Sigmoid colon (tissue), 7 donors: ENCODE measurements at regions of chr12 and their contacts with region 1.

Region 1: GRCh38 chr12:6965026-6965661 is 5.3 kb downstream of the PHB2 start:
- DNase-seq: peak; percentile 96
- H3K4me3 ChIP-seq: no peak overlapping the region
- H3K27ac ChIP-seq: peak overlapping the region; percentile 81 to 86 (median 82)
- H3K4me1 ChIP-seq: peaks cover 0 to 57% (median 46%) of the 10 kb centered on the region in 4 donors
- H3K27me3 ChIP-seq: no peaks in the 10 kb centered on the region
- CTCF ChIP-seq: peak; percentile 81 to 97 (median 88)
- EP300 ChIP-seq: no peak
- POLR2A ChIP-seq: no peak

Region 2: DNA sequence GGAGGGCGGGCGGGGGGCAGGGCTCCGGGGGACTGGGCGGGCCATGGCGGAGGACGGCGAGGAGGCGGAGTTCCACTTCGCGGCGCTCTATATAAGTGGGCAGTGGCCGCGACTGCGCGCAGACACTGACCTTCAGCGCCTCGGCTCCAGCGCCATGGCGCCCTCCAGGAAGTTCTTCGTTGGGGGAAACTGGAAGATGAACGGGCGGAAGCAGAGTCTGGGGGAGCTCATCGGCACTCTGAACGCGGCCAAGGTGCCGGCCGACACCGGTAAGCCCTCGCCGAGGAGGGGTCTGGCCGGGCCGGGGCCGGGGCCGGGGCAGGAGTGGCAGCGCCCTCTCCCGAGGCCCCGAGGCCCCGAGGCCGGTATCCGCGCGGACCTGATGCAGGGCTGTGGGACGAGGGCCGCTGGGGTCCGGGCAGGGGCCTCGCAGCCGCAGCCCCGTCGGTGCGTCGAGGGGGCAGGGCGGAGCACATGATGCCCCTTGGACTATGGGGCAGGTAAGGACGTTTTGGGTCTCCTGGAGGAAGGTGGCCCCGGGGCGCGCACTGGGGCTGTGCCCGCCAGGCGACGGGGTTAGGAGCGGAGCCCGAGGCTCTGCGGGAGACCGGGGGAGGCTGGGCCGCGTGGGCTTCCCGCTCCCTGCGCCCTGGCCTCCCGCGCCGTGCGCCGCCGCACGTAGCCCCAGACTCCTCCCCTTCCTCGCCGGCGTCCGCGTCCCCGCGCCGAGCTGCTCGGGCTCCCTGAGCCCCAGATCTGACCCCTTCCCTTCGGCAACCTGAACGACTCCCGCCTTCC is 97.5 kb before region 1 on chr12 and contains the start of gene TPI1:
- intact Hi-C with region 1: loop called (anchors 2 kb)
- DNase-seq: peak; percentile 96
- H3K4me3 ChIP-seq: peak within 1 kb of the TSS; percentile 72 to 100 (median 96)
- H3K27ac ChIP-seq: peak within 1 kb of the TSS; percentile 95 to 100 (median 98)
- H3K4me1 ChIP-seq: peaks cover 0 to 48% (median 42%) of the 10 kb centered on the region in 4 donors
- H3K27me3 ChIP-seq: no peaks in the 10 kb centered on the region
- CTCF ChIP-seq: no peak
- EP300 ChIP-seq: no peak
- POLR2A ChIP-seq: peak; percentile 96 to 98
- total RNA-seq, gene TPI1: 194 to 345 (median 299) TPM

Region 3: DNA sequence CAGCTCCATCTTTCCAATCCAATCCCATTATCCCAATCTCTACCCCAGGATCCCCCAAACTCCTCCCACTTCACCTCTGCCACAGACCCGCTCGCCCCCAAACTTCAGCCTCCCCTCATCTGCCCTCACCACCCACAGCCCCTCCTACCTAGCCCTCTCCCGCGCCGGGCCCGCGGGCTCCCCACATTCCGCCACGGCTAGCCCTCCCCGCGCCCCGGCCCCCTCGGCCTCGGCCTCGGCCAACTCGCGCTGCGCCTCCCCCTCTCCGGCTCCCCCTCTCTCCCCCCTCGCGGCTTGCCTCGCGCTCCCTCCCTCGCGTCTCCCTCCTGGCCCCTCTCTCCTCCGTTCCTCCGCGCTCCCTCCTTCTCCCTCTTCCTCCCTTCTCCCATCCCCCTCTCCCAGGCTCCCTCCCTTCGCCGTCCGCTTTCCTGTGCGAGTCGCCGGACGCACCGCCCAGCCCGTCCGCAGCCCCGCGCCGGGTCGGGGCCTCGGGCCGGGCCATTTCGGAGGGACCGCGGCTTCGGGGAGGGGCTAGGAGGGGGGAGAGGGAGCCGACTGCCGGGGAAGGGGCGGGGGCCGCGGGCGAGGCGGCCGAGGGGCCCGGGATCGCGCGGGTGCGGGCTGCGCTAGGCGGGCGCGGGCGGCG is 37.6 kb before region 1 on chr12 and contains the start of gene ATN1:
- intact Hi-C with region 1: loop called (anchors 2 kb)
- DNase-seq: peak; percentile 97
- H3K4me3 ChIP-seq: peak within 1 kb of the TSS; percentile 84 to 99 (median 98)
- H3K27ac ChIP-seq: peak within 1 kb of the TSS; percentile 97 to 100 (median 99)
- H3K4me1 ChIP-seq: peaks cover 4 to 76% (median 67%) of the 10 kb centered on the region in 4 donors
- H3K27me3 ChIP-seq: no peaks in the 10 kb centered on the region
- CTCF ChIP-seq: no peak
- EP300 ChIP-seq: no peak
- POLR2A ChIP-seq: peak in 1 of 2 donors; percentile 39
- total RNA-seq, gene ATN1: 46.4 to 138 (median 60.3) TPM

Region 4: GRCh38 chr12:6944381-6945186 is 20.6 kb before region 1 on chr12:
- intact Hi-C with region 1: loop called (anchors 1 kb)
- DNase-seq: peak; percentile 98
- H3K4me3 ChIP-seq: peak overlapping the region; percentile 52 to 76 (median 70)
- H3K27ac ChIP-seq: peak overlapping the region; percentile 92 to 99 (median 96)
- H3K4me1 ChIP-seq: peaks cover 0 to 55% (median 43%) of the 10 kb centered on the region in 4 donors
- H3K27me3 ChIP-seq: no peaks in the 10 kb centered on the region
- CTCF ChIP-seq: peak; percentile 77 to 97 (median 89)
- EP300 ChIP-seq: no peak
- POLR2A ChIP-seq: no peak

Region 5: GRCh38 chr12:7018350-7019042 is 53.4 kb after region 1 on chr12 and contains the start of gene LPCAT3:
- intact Hi-C with region 1: loop called (anchors 2 kb)
- DNase-seq: peak; percentile 99
- H3K4me3 ChIP-seq: peak within 1 kb of the TSS; percentile 63 to 93 (median 74)
- H3K27ac ChIP-seq: peak within 1 kb of the TSS; percentile 80 to 95 (median 94)
- H3K4me1 ChIP-seq: peaks cover 0 to 24% (median 23%) of the 10 kb centered on the region in 4 donors
- H3K27me3 ChIP-seq: no peaks in the 10 kb centered on the region
- CTCF ChIP-seq: peak; percentile 68 to 84 (median 74)
- EP300 ChIP-seq: peak in 1 of 4 donors; percentile 49
- POLR2A ChIP-seq: peak; percentile 67 to 83
- total RNA-seq, gene LPCAT3: 18.6 to 27.0 (median 25.4) TPM